ENCODE measurements at regions of chr3 and their contacts with region 1.

Region 1: GRCh38 chr3:142723968-142724681 is at the start of gene TRPC1:
- DNase-seq: peak; percentile 54
- ATAC-seq: peak; percentile 95
- H3K4me3 Mint-ChIP-seq: peak within 1 kb of the TSS; percentile 87
- H3K27ac Mint-ChIP-seq: peak within 1 kb of the TSS; percentile 76
- H3K4me1 Mint-ChIP-seq: peaks cover 5% of the 10 kb centered on the region
- H3K27me3 Mint-ChIP-seq: peaks cover 22% of the 10 kb centered on the region
- CTCF ChIP-seq: no peak
- total RNA-seq, gene TRPC1: 1.2 and 1.3 TPM in 2 replicates

Region 2: GRCh38 chr3:142595951-142596725 is 128.0 kb before region 1 on chr3 and contains the start of gene PLS1:
- CTCF ChIA-PET with region 1: no interaction called
- POLR2A ChIA-PET with region 1: no interaction called
- intact Hi-C with region 1: loop called (anchors 1 kb)
- DNase-seq: peak; percentile 89
- ATAC-seq: peak; percentile 84
- H3K4me3 Mint-ChIP-seq: peak within 1 kb of the TSS; percentile 95
- H3K27ac Mint-ChIP-seq: peak within 1 kb of the TSS; percentile 56
- H3K4me1 Mint-ChIP-seq: peaks cover 16% of the 10 kb centered on the region
- H3K27me3 Mint-ChIP-seq: peaks cover 12% of the 10 kb centered on the region
- CTCF ChIP-seq: no peak
- total RNA-seq, gene PLS1: 0.66 and 0.91 TPM in 2 replicates